ENCODE measurements at regions of chr16 and their contacts with region 1.

Region 1: DNA sequence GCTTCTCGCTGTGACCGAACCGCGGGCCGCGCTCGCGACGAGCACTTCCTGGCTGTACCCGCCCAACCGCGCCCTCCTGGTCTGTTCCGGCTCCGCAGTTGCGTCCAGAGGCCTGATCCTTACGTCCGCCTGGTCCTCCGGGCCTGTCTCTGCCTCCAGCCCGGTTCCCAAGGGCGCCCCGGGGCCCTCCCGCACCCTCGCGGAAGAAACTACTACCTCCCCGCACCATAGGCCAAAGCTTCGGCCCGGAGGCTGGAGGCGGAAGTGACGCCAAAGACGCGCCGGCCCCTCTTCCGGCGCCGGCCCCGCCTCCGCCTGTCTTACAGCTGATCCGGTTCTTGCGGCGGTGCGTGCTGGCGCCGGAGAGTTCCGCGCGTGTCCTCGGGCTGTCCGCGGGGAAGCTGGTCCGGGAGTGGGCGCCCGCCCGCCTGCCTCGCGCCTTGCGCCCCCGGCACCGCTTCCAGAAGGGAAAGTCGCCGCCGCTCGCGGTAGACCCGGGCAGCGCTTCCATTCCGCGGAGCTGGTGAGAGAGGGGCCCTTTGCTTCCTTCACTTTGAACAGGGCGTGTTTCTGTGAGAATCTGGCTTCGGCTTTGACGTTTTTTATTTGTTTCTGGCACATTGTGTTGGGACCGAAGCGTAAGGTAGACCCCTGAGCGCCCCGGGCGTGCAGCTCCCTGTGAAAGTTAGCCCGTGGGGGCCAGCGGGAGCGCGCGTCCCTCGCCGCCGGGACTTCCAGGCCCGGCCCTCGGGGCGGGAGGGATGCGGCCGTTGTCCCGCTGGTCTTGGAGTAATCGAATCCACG is at the start of gene ZNF778:
- DNase-seq: peak; percentile 95
- total RNA-seq, gene ZNF778: 8.4 to 9.3 TPM

Region 2: DNA sequence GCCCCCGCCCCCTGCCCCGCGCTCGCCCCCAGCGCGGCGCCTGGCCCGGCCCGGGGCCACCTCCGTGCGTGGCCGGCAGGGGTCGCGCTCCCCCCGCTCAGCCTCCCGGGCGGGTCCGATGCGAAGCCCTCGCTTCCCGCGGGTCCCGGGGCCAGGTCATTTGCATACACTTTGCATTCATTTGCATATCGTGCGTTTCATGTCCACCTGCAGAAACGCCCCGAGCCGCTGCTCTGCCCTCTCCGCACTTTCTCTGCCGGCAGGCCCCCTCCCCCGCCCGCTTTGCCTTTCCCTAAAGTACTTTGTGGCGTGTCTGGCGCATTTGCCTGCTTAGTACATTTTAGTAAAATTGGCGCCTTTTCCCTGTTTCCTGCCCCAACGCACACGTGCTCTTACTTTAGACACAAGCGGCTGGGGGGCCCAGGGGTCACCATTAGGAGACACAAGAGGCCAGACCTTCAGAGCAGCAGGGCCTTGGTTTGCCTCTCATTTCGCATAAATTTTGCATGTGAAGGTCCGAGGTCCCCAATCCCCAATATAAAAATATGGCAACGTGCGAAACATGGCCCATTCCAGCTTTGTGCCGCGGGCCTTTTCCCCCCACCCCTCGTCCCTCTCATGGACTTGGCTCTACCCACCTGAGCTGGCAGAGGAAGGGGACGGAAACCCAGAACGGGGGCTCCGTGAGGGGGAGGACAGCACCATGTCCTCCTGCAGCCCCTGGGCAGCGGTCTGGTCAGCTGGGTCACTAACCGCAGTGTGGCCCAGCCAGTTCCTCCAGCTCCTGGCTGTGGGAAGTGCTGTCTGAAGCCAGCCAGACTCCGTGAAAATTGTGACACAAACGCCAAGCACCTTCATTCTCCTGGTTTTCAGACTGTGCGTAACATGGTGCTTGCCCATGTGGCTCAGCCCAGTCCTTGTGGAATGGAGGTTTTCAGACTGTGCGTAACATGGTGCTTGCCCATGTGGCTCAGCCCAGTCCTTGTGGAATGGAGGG is 275.4 kb before region 1 on chr16:
- intact Hi-C with region 1: loop called (anchors 10 kb)
- DNase-seq: no peak

Region 3: DNA sequence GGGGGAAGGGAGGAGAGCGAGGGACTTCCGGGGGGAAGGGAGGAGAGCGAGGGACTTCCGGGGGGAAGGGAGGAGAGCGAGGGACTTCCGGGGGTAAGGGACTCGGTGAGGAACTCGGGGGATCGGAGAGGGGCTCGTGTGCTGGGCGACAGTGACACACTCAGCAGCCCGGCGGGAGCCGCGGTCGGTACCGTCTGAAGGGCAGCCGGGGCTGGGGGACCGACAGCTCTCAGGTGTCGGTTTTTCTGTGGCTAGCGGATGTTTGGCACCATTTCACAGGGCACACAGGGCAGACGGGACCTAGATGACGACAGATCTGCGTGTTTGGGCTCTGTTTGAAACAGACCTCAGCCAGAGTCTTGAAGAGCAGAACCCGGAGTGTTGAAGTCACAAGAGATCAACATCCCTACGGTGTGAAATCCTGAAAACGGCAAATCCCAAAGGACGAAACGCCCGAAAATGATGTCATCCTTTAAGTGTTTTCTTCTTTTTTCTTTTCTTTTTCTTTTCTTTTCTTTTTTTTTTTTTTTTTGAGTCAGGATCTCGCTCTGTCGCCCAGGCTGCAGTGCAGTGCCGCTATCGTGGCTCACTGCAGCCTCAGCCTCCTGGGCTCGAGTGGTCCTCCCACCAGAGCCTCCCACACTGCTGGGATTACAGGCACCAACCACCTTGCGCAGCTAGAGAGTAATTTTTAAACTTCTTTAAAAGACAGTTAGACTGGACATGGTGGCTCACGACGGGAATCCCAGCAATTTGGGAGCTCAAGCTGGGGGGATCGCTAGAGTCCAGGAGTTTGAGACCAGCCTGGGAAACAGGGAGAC is 23.8 kb after region 1 on chr16:
- intact Hi-C with region 1: no loop called
- DNase-seq: peak; percentile 90

Measured in posterior vena cava (tissue), 2 donors.